Right cardiac atrium (tissue), 5 donors: ENCODE measurements at regions of chr9 and their contacts with region 1.

Region 1: GRCh38 chr9:87324613-87325194 is 173.0 kb upstream of the DAPK1 start:
- DNase-seq: no peak
- ATAC-seq: peak; percentile 54 to 71
- H3K4me3 ChIP-seq: no peak overlapping the region
- H3K27ac ChIP-seq: no peak overlapping the region
- H3K4me1 ChIP-seq: no peaks in the 10 kb centered on the region
- H3K27me3 ChIP-seq: no peaks in the 10 kb centered on the region

Region 2: DNA sequence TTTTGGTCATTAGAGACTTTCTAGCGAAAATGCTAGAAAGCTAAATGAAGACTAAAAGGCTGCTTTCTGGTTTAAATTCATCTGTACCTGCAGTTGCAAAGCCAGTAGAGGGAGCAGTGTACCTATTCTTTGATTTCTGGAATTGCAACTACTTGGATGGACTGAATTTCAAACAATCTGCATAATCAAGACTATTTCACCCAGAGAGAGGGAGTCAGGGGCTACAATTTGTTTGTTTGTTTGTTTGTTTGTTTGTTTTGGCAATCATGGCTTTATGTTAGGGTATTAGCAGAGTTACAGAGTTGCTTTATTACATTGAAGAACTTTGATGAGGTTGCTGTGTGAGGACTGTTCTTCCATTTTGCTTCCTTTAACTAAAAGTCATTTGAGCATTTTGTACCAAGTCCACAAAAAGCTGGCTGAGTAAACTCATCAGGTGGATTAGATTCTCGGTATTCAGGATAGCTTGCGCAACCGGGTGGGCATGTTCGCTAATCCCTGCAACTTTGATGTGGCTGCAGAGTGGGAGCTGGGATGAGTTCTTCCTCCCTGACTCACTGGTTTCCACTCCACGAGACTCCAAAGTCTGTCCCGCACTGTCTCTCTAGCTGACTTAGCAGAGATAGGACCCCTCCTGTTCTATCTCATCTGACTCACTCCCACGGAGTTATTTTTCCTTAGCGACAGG is 890.5 kb before region 1 on chr9:
- intact Hi-C with region 1: loop called in 2 of 4 experiments (anchors 5 to 10 kb)
- DNase-seq: peak in 2 of 3 donors; percentile 33 to 46
- ATAC-seq: peak in 1 of 2 donors; percentile 70
- H3K4me3 ChIP-seq: no peak overlapping the region
- H3K27ac ChIP-seq: no peak overlapping the region
- H3K4me1 ChIP-seq: no peaks in the 10 kb centered on the region
- H3K27me3 ChIP-seq: no peaks in the 10 kb centered on the region

Region 3: DNA sequence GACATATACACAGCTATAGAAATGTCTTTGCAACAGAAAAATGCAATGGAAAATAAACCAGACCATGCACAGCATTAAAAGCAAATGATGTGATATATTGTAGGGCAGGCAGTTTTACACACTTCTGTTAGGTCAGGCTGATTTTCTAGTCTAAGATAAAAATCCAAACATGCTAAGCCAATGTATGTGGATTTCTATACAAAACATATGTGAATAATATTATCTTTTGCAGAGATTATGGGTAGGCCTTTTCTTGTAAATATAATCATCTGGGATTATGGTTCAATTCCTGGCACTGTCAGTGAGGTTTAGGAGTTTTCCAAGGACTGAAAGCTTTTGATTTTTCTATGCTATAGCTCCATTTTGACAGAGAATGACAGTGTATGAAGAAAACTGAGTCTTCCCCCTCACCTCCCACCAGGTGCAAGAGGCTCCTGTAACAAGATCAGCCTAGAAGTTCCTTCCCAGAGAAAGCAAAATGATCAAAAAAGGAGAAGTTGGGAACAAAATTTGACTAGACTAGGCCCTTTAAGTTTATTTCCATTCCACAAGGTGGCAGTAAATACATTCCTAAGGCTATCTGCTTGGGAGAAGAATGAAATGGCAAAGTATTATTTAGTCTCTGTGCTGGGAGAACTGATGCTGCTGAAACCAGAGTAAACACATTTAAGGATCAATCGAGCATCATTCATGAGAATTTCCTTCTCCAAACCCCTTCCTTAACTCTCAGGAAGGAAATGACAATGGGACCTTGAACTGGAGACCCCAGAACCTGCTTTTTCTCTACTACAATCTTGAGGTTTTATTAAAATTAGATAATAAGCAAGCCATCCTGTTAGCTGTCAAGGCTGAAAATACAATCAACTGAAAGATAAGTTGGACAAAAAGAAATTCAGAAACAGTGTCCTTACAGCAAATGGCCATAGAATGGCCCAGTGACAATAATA is 837.5 kb before region 1 on chr9:
- intact Hi-C with region 1: loop called in 3 of 4 experiments (anchors 2 to 5 kb)
- DNase-seq: no peak
- ATAC-seq: peak; percentile 76 to 81
- H3K4me3 ChIP-seq: no peak overlapping the region
- H3K27ac ChIP-seq: no peak overlapping the region
- H3K4me1 ChIP-seq: no peaks in the 10 kb centered on the region
- H3K27me3 ChIP-seq: no peaks in the 10 kb centered on the region

Region 4: DNA sequence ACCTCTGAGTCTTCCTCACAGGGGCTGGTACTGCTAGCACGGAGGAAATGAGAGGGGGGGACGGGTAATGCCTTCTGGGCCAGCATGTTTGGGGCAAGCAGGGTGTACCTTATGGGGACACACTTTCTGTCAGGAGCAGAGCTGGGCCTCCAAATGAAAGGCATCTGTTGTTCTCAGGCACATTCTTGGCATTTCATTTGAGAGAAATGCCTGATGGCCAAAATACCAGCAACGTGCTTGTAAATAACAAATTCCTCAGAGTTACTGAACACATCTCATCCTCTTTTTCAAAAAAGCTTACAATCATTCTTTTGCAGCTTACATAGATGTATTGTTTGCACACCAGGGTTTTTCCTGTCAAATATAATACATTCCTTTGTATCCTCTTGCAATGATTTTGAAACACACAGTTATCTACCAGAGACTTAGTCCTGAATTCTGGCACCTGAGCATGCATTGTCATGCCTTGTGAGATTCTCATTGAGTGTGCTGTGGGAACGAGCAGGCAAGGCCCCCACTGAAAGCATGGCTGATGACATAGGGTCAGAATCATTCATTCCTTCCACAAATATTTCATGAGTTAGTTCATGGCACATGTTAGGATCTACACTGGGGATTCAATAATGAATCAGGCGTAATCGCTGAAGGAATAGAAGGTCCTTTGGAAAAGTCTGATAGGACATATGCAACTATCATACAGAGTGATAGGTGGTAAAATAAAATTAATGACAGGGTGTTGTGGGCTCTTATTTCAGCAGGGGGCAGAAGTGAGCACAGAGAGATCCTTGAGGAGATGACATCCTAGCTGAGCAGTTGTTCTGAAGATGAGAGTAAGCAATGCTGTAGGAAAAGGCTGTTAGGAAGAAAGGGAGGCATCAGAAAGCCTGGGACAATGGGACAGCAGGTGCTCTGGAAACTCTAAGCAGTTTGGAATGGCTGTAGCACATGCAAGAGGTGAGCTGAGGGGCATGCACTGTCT is 709.5 kb before region 1 on chr9:
- intact Hi-C with region 1: loop called in 1 of 4 experiments (anchors 10 kb)
- DNase-seq: peak in 1 of 3 donors; percentile 42
- ATAC-seq: no peak
- H3K4me3 ChIP-seq: no peak overlapping the region
- H3K27ac ChIP-seq: no peak overlapping the region
- H3K4me1 ChIP-seq: no peaks in the 10 kb centered on the region
- H3K27me3 ChIP-seq: no peaks in the 10 kb centered on the region

Region 5: GRCh38 chr9:86948074-86948929 is 376.4 kb before region 1 on chr9:
- intact Hi-C with region 1: loop called in 1 of 4 experiments (anchors 5 kb)
- DNase-seq: peak; percentile 80 to 93 (median 91)
- ATAC-seq: peak; percentile 76 to 84
- H3K4me3 ChIP-seq: peak overlapping the region; percentile 95
- H3K27ac ChIP-seq: peak overlapping the region; percentile 75
- H3K4me1 ChIP-seq: no peaks in the 10 kb centered on the region
- H3K27me3 ChIP-seq: no peaks in the 10 kb centered on the region

Region 6: GRCh38 chr9:86968258-86968920 is 356.3 kb before region 1 on chr9:
- intact Hi-C with region 1: loop called in 1 of 4 experiments (anchors 10 kb)
- DNase-seq: peak; percentile 68 to 83 (median 78)
- ATAC-seq: peak; percentile 61 to 73
- H3K4me3 ChIP-seq: no peak overlapping the region
- H3K27ac ChIP-seq: no peak overlapping the region
- H3K4me1 ChIP-seq: peaks cover 1% of the 10 kb centered on the region
- H3K27me3 ChIP-seq: no peaks in the 10 kb centered on the region

Region 7: DNA sequence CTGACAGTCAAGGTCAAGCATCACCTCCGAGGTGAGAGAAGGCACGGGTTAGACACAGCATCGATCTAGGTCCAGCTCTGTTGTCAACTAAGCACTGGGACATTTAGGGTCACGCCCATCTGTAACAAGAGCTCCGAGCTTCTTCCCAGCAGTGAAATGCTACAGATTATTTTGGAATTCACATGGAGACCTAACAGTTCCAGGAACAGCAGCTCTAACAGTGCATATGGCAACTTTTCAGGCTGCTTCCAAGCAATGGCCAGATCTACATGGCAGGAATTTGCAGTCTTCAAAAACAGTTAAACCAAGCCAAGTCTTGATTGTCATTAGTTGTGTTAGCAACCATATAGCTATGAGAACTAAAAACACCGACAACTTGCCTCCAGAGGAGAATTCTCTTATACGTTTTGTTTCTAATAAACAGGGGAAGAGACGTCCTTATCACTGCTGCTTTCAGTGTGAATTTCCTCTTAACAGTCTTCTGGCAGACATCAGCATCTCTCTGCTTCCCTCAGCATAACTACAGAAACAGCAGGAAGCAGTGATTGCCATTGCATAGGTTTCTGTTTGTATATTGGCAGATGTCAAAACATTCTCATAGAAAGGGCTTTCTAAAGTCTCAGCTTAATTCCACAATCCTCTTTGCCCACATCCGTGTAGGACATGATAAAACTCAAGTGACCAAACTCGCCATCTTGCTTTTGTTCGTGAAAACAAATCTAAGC is 69.1 kb before region 1 on chr9:
- intact Hi-C with region 1: no loop called
- DNase-seq: no peak
- ATAC-seq: peak; percentile 49 to 83
- H3K4me3 ChIP-seq: no peak overlapping the region
- H3K27ac ChIP-seq: no peak overlapping the region
- H3K4me1 ChIP-seq: peaks cover 3% of the 10 kb centered on the region
- H3K27me3 ChIP-seq: no peaks in the 10 kb centered on the region

Region 8: DNA sequence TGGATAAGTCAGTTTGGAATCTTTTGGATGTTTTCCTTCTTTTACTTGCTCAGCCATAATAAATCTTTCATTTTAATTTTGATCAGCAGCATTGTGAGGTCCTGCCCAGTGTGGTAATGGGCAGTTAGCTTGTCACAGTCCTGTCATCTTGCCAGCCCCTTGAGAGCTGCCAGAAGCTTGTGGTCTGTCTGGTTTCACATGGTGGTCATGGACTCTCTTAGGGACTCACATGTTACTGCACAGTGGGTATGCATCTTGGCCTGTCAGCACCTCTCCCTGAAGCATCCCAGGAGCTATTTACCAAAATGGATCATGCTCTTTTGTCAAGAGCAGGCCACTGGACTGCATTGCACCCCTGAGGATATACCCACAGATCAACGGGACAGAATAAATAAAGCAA is 233.3 kb after region 1 on chr9:
- intact Hi-C with region 1: no loop called
- DNase-seq: peak; percentile 35 to 84 (median 80)
- ATAC-seq: peak in 1 of 2 donors; percentile 59
- H3K4me3 ChIP-seq: no peak overlapping the region
- H3K27ac ChIP-seq: no peak overlapping the region
- H3K4me1 ChIP-seq: no peaks in the 10 kb centered on the region
- H3K27me3 ChIP-seq: no peaks in the 10 kb centered on the region